Activated CD4-positive, alpha-beta T cell treated with anti-CD3 and anti-CD28 coated beads, Interleukin-2, amount 10 ng/mL, durations not matched to agents 7 days and 5 days (primary cell): ENCODE measurements at regions of chr5 and their contacts with region 1.

Region 1: DNA sequence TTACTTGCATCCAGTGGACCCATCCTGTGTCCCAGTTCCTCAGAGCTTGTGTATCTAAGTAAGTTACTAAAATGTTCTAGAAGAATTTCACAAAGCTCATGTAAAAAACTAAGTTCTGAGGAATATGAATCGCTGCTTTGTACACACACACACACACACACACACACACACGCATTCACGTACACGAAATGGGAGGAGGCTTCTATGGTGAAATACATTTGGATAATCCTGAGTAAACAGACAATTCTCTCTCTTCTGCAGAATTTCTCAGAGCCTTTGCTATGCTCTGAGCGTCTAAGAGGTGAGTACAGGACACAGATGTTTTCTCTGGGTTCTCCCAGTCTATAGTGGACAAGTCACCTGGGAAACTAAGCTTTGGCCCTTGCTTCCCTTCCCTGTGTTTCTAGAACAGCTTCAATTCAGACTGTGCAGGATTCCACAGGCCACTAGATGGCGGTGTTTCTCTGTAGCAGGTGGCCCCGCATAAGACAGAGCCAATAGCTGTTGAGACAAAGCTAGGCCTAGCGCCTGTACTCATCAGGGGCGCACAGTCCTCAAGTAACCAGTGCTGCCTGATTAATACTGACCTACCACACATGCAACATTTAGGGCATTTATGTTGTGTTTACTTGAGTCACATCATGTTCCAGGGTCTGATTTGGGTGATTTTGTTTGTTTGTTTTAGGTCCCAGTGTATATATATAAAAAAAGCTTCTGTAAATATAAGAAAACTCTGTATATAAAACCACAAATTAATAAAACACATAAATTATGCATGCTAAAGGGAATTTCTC is 114.8 kb downstream of the LIFR start:
- DNase-seq: peak; percentile 88
- H3K4me3 Mint-ChIP-seq: no peak overlapping the region
- H3K27ac Mint-ChIP-seq: no peak overlapping the region
- H3K4me1 Mint-ChIP-seq: no peaks in the 10 kb centered on the region
- H3K27me3 Mint-ChIP-seq: peaks cover 51% of the 10 kb centered on the region

Region 2: GRCh38 chr5:38168029-38168428 is 273.6 kb before region 1 on chr5:
- CTCF ChIA-PET with region 1: no interaction called
- POLR2A ChIA-PET with region 1: no interaction called
- DNase-seq: no peak
- H3K4me3 Mint-ChIP-seq: no peak overlapping the region
- H3K27ac Mint-ChIP-seq: no peak overlapping the region
- H3K4me1 Mint-ChIP-seq: no peaks in the 10 kb centered on the region
- H3K27me3 Mint-ChIP-seq: no peaks in the 10 kb centered on the region

Region 3: DNA sequence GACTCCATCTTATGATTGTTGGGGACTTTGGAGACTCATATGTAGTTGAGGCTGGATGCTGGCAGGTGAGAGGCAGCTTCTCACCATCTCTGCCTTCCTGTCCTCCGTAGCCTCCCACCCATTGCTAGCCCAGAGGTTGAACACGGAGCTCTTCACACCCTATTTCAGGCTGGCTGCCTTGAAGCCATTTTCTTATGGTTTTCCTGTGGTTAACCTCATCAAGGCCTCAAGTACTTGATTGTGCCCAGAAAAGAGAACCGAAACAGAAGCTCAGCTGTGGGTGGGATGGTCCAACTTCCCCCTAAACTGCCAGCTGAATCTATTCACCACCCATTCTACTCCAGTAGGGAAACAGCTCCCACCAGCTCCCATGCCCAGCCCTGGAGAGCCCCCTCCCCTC is 11.9 kb after region 1 on chr5:
- CTCF ChIA-PET with region 1: interaction called, 29 read pairs
- POLR2A ChIA-PET with region 1: no interaction called
- DNase-seq: peak; percentile 81
- H3K4me3 Mint-ChIP-seq: no peak overlapping the region
- H3K27ac Mint-ChIP-seq: peak overlapping the region; percentile 55
- H3K4me1 Mint-ChIP-seq: peaks cover 24% of the 10 kb centered on the region
- H3K27me3 Mint-ChIP-seq: peaks cover 77% of the 10 kb centered on the region

Region 4: DNA sequence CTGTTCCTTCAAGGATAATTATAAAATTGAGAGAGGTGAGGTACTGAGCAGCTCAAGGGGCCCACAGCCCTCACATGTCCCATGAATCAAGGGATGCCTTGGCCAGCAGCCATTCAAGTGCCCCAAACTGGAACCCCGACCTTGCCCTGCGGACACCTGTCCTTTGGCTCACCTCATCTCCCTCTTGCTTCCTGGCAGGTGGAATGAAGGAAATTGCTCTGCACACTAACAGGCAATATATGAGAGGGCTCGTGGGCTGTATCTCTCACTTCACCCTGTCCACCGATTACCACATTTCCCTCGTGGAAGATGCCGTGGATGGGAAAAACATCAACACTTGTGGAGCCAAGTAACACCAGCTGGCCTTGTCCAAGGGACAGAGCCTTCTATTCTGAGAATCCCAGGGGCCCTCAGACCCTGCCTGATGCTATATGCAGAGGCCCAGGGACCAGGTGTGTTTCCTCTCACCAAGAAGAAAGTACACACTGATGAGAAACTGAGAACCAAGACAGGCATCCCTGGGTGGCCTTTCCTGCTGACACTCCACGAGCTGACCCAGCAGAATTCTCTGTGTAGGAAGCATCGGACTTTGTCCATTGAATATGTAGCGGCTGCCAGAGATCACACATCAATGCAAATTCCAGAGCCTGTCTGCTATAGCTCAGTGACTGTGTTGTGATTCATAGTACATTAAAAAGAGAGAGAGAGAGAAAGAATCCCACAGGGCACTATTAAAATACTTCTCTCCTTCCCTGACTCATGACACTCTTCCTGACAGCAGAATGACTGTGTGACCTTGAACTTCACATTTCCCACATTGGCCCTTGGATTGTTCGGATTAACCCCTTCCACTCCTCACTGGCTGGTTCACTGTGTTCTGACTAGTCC is 22.2 kb after region 1 on chr5:
- CTCF ChIA-PET with region 1: interaction called, 15 read pairs
- POLR2A ChIA-PET with region 1: no interaction called
- DNase-seq: no peak
- H3K4me3 Mint-ChIP-seq: no peak overlapping the region
- H3K27ac Mint-ChIP-seq: no peak overlapping the region
- H3K4me1 Mint-ChIP-seq: no peaks in the 10 kb centered on the region
- H3K27me3 Mint-ChIP-seq: peaks cover 32% of the 10 kb centered on the region

Region 5: DNA sequence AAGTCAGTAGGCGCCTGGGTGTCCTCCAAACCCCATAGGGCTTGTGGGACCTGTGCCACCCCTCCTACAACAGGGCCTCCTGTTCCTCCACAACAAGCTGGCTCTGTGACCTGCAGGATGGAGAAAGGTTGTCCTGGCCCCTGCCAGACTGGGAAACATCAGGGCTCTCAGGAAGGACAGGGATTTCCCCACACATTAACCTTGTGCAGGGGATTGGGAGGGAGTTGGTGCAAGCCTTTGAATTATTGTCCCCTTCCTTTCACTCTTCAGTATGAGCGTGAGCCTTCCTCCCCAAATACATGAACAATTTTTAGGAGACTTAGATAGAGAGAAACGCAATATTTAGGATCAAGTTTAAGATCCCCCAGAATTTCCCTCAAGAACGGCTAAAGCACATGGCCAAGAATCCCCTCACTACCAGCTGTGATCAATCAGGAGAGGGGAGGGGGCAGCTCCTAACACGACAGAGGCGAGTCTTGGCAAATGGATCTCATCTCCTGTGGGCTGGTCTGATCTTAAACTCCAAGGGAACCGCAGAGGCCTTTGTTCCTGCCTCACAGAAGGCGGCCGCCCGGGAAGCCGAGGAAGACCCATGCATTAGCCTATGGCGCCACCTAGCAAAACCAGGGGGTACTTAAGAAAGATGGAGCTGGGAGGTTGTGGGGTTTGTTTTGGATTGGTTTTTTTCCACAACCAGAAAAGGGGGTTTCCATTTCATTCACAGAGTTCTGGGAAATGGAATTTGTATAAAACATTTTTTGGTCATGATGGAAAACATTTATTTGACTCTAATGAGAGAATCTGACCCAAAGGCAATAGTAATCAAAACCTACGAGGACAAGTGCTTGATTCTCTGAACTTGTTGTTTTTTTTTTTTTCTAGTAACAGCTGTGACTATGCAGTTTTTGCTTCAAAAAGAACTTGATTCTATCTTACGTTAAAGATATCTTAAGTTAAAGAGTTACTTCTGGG is 368.0 kb after region 1 on chr5:
- CTCF ChIA-PET with region 1: interaction called, 25 read pairs
- POLR2A ChIA-PET with region 1: no interaction called
- DNase-seq: peak; percentile 58
- H3K4me3 Mint-ChIP-seq: no peak overlapping the region
- H3K27ac Mint-ChIP-seq: no peak overlapping the region
- H3K4me1 Mint-ChIP-seq: no peaks in the 10 kb centered on the region
- H3K27me3 Mint-ChIP-seq: peaks cover 12% of the 10 kb centered on the region